ENCODE measurements at regions of chr12 and their contacts with region 1.

Region 1: DNA sequence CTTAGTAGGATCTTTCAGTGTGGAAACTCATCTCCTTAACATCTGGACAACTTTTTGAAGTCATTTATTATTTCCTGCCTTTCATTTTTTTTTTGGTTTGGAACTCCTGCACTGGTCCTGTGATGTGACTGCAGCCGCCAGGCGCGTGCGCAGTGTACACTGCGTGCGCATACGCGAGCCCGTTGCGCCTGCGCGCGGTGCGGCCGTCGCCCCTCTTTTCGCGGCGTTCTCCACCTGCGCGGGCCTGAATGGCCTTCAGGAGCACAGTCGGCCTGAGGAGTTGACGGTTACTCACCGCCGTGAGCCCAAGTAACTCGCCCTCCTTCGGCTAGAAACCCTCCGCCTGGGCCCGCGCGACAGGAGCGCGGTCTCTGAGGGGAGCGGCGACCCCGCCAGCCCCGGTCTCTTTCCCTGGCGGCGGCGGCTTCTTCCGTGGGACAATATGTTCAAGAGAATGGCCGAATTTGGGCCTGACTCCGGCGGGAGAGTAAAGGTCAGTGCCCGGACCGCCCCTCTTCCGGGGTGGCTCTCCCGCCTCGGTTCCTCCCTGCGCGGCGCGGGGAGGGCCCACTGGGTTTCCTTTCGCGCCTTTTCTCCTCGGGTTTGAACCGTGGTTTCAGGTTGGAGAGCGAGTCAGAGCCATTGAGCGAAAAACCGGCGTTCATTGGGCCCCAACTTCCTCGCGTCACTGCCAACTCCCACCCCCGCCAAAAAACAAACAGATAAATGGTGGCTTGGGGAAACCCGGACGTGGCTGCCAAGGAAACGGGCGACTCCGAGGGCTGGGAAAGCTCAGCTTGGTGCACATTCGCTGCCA is at the start of gene YEATS4:
- DNase-seq: peak; percentile 97 to 98
- H3K4me3 ChIP-seq: peak within 1 kb of the TSS; percentile 61
- H3K4me3 Mint-ChIP-seq: peak within 1 kb of the TSS; percentile 90
- H3K27ac Mint-ChIP-seq: peak within 1 kb of the TSS; percentile 96
- H3K4me1 ChIP-seq: peaks cover 22% of the 10 kb centered on the region
- H3K4me1 Mint-ChIP-seq: peaks cover 34% of the 10 kb centered on the region
- H3K27me3 ChIP-seq: no peaks in the 10 kb centered on the region
- H3K27me3 Mint-ChIP-seq: no peaks in the 10 kb centered on the region
- CTCF ChIP-seq: no peak
- total RNA-seq, gene YEATS4: 40.9 and 42.6 TPM in 2 replicates

Region 2: DNA sequence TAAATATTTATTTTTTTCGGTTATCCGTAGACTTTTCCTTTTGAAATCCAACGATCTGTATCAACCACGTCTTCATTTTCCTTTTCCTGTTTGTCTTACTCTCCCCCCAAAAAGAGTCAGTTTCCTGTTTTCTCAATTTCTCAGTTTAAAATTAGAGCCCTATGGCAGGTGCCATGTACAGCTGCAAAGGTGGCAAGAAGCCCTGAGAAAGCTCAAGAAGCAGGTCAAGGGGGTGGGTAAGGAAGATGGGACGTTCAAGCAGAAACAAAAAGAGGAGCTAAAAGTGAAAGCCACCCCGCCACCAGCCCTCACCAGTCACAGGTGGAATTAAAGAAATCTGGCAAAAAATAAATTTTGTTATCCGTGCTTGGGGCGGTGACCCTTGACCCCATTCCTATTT is 587.0 kb before region 1 on chr12:
- CTCF ChIA-PET with region 1: no interaction called
- POLR2A ChIA-PET with region 1: no interaction called
- intact Hi-C with region 1: no loop called
- DNase-seq: no peak
- H3K4me3 ChIP-seq: no peak overlapping the region
- H3K4me3 Mint-ChIP-seq: no peak overlapping the region
- H3K27ac Mint-ChIP-seq: no peak overlapping the region
- H3K4me1 ChIP-seq: no peaks in the 10 kb centered on the region
- H3K4me1 Mint-ChIP-seq: no peaks in the 10 kb centered on the region
- H3K27me3 ChIP-seq: no peaks in the 10 kb centered on the region
- H3K27me3 Mint-ChIP-seq: no peaks in the 10 kb centered on the region
- CTCF ChIP-seq: no peak

Region 3: GRCh38 chr12:69070319-69071090 is 289.2 kb before region 1 on chr12:
- CTCF ChIA-PET with region 1: no interaction called
- POLR2A ChIA-PET with region 1: no interaction called
- intact Hi-C with region 1: no loop called
- DNase-seq: peak; percentile 67 to 74
- H3K4me3 ChIP-seq: no peak overlapping the region
- H3K4me3 Mint-ChIP-seq: no peak overlapping the region
- H3K27ac Mint-ChIP-seq: no peak overlapping the region
- H3K4me1 ChIP-seq: no peaks in the 10 kb centered on the region
- H3K4me1 Mint-ChIP-seq: no peaks in the 10 kb centered on the region
- H3K27me3 ChIP-seq: no peaks in the 10 kb centered on the region
- H3K27me3 Mint-ChIP-seq: no peaks in the 10 kb centered on the region
- CTCF ChIP-seq: peak; percentile 83 to 91

Region 4: DNA sequence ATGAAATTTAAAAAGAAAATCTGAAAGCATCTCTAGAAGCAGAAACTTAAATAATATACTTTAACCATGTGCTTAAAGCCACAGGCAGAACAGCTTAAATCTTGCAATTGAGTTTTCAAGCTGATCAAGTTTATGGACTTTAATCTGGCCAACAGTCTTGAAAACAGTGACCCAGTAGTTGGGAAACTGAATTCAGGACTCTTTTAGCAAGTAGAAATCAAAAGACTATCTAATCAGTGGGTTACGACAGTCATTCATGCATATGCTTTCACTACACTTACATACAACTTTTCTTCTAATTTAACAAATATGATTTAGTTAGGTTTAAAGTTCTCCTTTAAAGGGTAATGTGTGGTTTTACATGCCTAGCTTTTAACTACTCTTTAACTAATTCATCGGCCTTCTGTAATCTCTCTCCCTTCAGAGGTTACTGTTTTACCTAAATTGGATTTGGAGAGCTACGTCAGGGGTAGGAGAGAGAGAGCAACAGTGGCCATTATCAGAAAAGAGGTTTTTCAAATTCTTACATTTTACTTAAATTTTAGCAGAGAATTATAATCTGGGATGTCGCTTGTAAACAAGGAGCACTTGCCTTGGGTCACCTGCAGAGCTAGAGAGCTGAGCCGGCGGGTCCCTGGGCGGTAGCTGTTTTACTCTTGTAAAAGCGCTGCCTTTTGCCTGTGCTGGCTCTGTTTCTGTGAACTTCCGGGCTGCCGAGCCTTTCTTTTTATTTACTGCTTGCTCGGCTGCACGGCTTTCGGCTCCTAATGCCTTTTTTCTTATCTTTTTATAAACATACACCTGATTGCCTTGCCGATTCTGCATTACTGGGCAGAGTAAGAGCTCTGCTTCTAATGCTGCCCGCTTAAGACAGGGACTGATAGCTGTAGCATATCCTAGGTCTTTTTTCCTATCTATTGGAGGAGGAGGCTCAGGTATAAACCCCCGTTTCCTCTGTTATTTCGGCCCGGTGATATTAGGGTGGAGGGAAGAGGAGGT is 29.0 kb before region 1 on chr12:
- CTCF ChIA-PET with region 1: interaction called, 18 read pairs
- POLR2A ChIA-PET with region 1: interaction called, 7 read pairs
- intact Hi-C with region 1: loop called (anchors 1 kb)
- DNase-seq: peak; percentile 49 to 56
- H3K4me3 ChIP-seq: peak overlapping the region; percentile 60
- H3K4me3 Mint-ChIP-seq: peak overlapping the region; percentile 97
- H3K27ac Mint-ChIP-seq: peak overlapping the region; percentile 79
- H3K4me1 ChIP-seq: peaks cover 36% of the 10 kb centered on the region
- H3K4me1 Mint-ChIP-seq: peaks cover 40% of the 10 kb centered on the region
- H3K27me3 ChIP-seq: no peaks in the 10 kb centered on the region
- H3K27me3 Mint-ChIP-seq: no peaks in the 10 kb centered on the region
- CTCF ChIP-seq: no peak

Region 5: GRCh38 chr12:69388371-69388770 is 28.6 kb after region 1 on chr12:
- CTCF ChIA-PET with region 1: interaction called, 12 read pairs
- POLR2A ChIA-PET with region 1: no interaction called
- intact Hi-C with region 1: no loop called
- DNase-seq: peak in 1 of 2 experiments; percentile 50
- H3K4me3 ChIP-seq: no peak overlapping the region
- H3K4me3 Mint-ChIP-seq: no peak overlapping the region
- H3K27ac Mint-ChIP-seq: no peak overlapping the region
- H3K4me1 ChIP-seq: peaks cover 34% of the 10 kb centered on the region
- H3K4me1 Mint-ChIP-seq: peaks cover 15% of the 10 kb centered on the region
- H3K27me3 ChIP-seq: no peaks in the 10 kb centered on the region
- H3K27me3 Mint-ChIP-seq: no peaks in the 10 kb centered on the region
- CTCF ChIP-seq: peak; percentile 43 to 70

Region 6: DNA sequence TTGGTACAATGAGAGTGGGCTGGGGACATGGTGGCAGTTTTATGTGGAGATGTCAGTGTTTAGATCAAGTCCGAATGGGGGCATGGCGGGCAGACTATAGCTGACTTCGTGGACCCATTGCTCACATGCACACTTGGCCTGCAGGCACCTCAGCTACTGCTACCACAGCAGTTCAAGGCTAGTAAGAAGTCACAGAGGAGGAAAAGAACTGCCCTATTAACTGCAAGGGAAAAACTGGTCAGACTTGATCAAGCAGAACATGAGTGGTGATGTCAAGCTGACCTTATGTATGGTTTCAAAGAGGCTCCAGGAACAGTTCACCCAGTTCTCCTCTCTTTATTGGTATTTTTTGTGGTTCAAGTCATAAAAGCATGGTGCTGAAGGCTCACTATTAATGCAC is 80.3 kb after region 1 on chr12:
- CTCF ChIA-PET with region 1: interaction called, 10 read pairs
- POLR2A ChIA-PET with region 1: no interaction called
- intact Hi-C with region 1: no loop called
- DNase-seq: peak in 1 of 2 experiments; percentile 23
- H3K4me3 ChIP-seq: no peak overlapping the region
- H3K4me3 Mint-ChIP-seq: no peak overlapping the region
- H3K27ac Mint-ChIP-seq: no peak overlapping the region
- H3K4me1 ChIP-seq: peaks cover 24% of the 10 kb centered on the region
- H3K4me1 Mint-ChIP-seq: peaks cover 24% of the 10 kb centered on the region
- H3K27me3 ChIP-seq: no peaks in the 10 kb centered on the region
- H3K27me3 Mint-ChIP-seq: no peaks in the 10 kb centered on the region
- CTCF ChIP-seq: no peak

Region 7: DNA sequence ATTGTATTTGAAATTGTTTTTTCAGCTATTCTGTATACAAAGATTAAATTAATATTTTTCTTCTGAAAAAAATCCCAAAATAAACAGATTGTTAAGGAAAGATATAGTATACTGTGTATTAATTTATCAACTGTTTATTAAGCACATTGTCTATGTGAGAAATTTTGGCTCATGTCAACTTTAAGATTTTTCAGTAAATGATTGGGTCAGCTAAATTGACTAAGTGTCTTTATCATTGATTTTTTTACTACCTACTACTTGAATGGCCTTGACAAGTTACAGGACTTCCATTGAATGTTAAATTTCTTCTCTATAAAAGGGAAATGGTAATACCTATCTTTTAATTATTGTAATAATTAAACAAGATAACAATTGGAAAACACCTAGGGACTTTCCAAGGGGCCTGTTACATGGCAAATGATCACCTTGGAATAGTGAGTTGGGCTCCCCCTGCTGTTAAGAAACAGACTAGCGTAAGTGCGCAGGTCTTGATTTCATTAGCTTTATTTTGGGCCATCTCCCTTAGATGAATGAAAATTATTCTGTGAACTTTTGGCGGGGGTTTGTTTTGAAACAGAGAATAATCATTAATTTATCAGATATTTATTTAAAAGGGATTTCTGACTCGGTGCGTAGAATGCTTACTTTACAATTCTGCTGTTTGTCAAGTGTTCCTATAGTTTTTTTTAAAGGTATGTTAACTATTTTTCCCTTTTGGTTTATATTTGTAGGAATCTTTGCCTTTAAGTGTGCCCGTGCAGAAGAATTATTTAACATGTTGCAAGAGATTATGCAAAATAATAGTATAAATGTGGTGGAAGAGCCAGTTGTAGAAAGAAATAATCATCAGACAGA is 211.0 kb after region 1 on chr12:
- CTCF ChIA-PET with region 1: interaction called, 7 read pairs
- POLR2A ChIA-PET with region 1: no interaction called
- intact Hi-C with region 1: loop called (anchors 1 kb)
- DNase-seq: peak; percentile 65 to 73
- H3K4me3 ChIP-seq: no peak overlapping the region
- H3K4me3 Mint-ChIP-seq: no peak overlapping the region
- H3K27ac Mint-ChIP-seq: no peak overlapping the region
- H3K4me1 ChIP-seq: peaks cover 13% of the 10 kb centered on the region
- H3K4me1 Mint-ChIP-seq: peaks cover 27% of the 10 kb centered on the region
- H3K27me3 ChIP-seq: no peaks in the 10 kb centered on the region
- H3K27me3 Mint-ChIP-seq: no peaks in the 10 kb centered on the region
- CTCF ChIP-seq: peak; percentile 77 to 83

Region 8: GRCh38 chr12:69630191-69630590 is 270.5 kb after region 1 on chr12:
- CTCF ChIA-PET with region 1: interaction called, 18 read pairs
- POLR2A ChIA-PET with region 1: no interaction called
- intact Hi-C with region 1: loop called (anchors 1 kb)
- DNase-seq: peak in 1 of 2 experiments; percentile 45
- H3K4me3 ChIP-seq: no peak overlapping the region
- H3K4me3 Mint-ChIP-seq: no peak overlapping the region
- H3K27ac Mint-ChIP-seq: no peak overlapping the region
- H3K4me1 ChIP-seq: peaks cover 3% of the 10 kb centered on the region; the same call in 1 of the 2 replicates
- H3K4me1 Mint-ChIP-seq: no peaks in the 10 kb centered on the region
- H3K27me3 ChIP-seq: no peaks in the 10 kb centered on the region
- H3K27me3 Mint-ChIP-seq: no peaks in the 10 kb centered on the region
- CTCF ChIP-seq: peak; percentile 20 to 41

Region 9: GRCh38 chr12:69879041-69879960 is 519.6 kb after region 1 on chr12:
- CTCF ChIA-PET with region 1: no interaction called
- POLR2A ChIA-PET with region 1: no interaction called
- intact Hi-C with region 1: loop called (anchors 10 kb)
- DNase-seq: peak; percentile 67 to 76
- H3K4me3 ChIP-seq: peak overlapping the region; percentile 31
- H3K4me3 Mint-ChIP-seq: peak overlapping the region; percentile 68
- H3K27ac Mint-ChIP-seq: no peak overlapping the region
- H3K4me1 ChIP-seq: no peaks in the 10 kb centered on the region; the same call in 1 of the 2 replicates
- H3K4me1 Mint-ChIP-seq: peaks cover 9% of the 10 kb centered on the region
- H3K27me3 ChIP-seq: no peaks in the 10 kb centered on the region; the same call in 1 of the 2 replicates
- H3K27me3 Mint-ChIP-seq: peaks cover 25% of the 10 kb centered on the region
- CTCF ChIP-seq: peak; percentile 90 to 93